PC-3 (cell line): ENCODE measurements at regions of chr4 and their contacts with region 1.

Region 1: DNA sequence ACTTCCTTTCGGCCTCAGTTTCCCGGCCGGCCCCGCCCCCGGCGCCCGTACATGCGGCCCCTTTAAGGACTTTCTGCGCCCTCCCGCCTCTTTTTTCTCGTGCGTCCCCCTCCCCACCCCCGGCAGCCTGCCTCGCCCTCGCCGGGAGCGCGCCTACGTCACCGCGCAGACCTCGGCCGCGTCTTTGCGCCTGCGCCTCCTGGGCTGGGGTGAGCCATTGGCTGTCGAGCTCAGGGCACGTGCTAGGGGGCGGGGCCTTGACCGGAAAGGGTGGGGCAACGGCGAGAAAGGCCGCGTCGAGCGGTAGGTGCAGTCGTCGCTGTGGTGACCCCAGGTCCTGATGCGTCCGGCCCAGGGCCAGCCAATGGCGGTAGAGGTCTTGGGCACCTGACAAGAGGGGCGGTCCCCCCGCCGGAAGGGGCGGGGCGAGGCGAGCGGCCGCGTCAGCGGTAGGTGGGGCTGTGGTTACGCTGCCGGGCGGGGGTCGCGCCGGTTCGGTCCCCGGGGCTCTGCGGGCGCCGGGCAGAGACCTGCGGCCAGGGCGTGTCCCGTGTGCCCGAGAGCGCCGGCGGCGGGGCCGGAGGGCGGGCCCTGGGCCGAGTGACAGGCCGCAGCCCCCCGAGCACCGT is at the start of gene UVSSA:
- DNase-seq: peak; percentile 96
- ATAC-seq: peak; percentile 79
- H3K4me3 ChIP-seq: peak within 1 kb of the TSS; percentile 73
- H3K27ac ChIP-seq: peak within 1 kb of the TSS; percentile 80
- H3K4me1 ChIP-seq: peaks cover 35% of the 10 kb centered on the region
- H3K27me3 ChIP-seq: no peaks in the 10 kb centered on the region
- CTCF ChIP-seq: no peak
- total RNA-seq, gene UVSSA: 6.2 and 11.2 TPM in 2 replicates

Region 2: DNA sequence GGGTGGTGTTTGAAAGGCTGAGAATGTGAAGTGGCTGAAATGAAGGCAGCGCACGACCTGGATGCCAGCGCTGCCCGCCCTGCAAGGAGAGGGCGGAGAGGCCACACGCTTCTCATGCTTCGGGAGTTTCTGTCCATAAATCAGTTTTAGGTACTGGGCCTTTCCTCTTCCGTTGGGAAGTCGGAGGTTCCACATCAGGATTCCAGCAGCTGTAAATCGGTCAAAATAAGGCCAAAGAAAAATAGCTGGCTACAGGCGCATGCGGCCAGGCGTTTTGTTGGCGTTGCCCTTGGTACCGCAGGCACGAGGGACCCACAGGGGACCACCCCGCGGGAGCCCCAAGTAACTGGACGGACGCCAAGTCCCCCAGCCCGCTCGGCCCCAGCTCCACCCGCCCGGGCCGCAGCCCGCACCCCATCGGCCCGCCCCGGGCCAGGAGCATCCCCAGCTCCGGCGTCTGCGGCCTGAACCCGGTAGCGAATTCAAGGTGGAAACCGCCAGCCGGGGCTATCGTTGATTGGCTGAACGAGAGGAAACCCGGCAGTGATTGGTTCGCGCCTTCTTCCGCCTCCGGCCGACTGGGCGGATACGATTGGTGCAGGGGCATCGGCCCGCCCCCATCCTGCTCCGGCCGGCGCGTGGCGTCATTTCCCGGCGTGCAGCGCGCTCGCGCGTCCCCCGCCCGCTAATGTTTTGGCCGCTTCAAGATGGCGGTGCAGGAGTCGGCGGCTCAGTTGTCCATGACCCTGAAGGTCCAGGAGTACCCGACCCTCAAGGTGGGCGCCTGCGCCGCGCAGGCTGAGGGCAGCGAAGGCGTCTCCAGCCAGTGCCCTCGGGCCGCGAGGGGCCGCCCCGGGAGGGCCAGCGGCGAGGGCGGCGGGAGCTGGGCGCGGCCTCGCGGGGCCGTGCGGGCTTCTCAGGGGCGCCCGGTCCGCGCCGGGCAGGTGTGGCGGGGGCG is 57.4 kb before region 1 on chr4 and contains the start of gene MAEA:
- CTCF ChIA-PET with region 1: no interaction called
- POLR2A ChIA-PET with region 1: interaction called, 9 read pairs
- intact Hi-C with region 1: loop called (anchors 5 kb)
- DNase-seq: peak; percentile 94
- ATAC-seq: peak; percentile 98
- H3K4me3 ChIP-seq: peak within 1 kb of the TSS; percentile 97
- H3K27ac ChIP-seq: peak within 1 kb of the TSS; percentile 55
- H3K4me1 ChIP-seq: peaks cover 20% of the 10 kb centered on the region
- H3K27me3 ChIP-seq: no peaks in the 10 kb centered on the region
- CTCF ChIP-seq: no peak
- total RNA-seq, gene MAEA: 48.1 and 81.4 TPM in 2 replicates